Panc1 (cell line): ENCODE measurements at regions of chr15 and their contacts with region 1.

Region 1: GRCh38 chr15:43541785-43542184 is 24.4 kb downstream of the MAP1A start:
- DNase-seq: no peak
- ATAC-seq: no peak
- H3K4me3 ChIP-seq: no peak overlapping the region
- H3K27ac ChIP-seq: no peak overlapping the region; the same call in 1 of the 2 replicates
- H3K4me1 ChIP-seq: no peaks in the 10 kb centered on the region
- H3K27me3 ChIP-seq: no peaks in the 10 kb centered on the region
- CTCF ChIP-seq: no peak

Region 2: GRCh38 chr15:43735416-43735815 is 193.6 kb after region 1 on chr15:
- CTCF ChIA-PET with region 1: no interaction called
- POLR2A ChIA-PET with region 1: interaction called, 14 read pairs
- in situ Hi-C with region 1: no loop called
- intact Hi-C with region 1: no loop called
- DNase-seq: no peak
- ATAC-seq: no peak
- H3K4me3 ChIP-seq: no peak overlapping the region
- H3K27ac ChIP-seq: no peak overlapping the region
- H3K4me1 ChIP-seq: no peaks in the 10 kb centered on the region
- H3K27me3 ChIP-seq: no peaks in the 10 kb centered on the region
- CTCF ChIP-seq: no peak